Activated B cell treated with CpG ODN at 0.5 μM for 24 hours (primary cell): ENCODE measurements at regions of chr7 and their contacts with region 1.

Region 1: GRCh38 chr7:140053812-140054539 is 8.8 kb downstream of the PARP12 start:
- DNase-seq: no peak
- ATAC-seq: peak; percentile 81
- H3K4me3 Mint-ChIP-seq: peak overlapping the region; percentile 29
- H3K27ac Mint-ChIP-seq: peak overlapping the region; percentile 86
- H3K4me1 Mint-ChIP-seq: peaks cover 72% of the 10 kb centered on the region
- H3K27me3 Mint-ChIP-seq: no peaks in the 10 kb centered on the region
- CTCF ChIP-seq: no peak

Region 2: GRCh38 chr7:139494835-139495579 is 559.0 kb before region 1 on chr7:
- CTCF ChIA-PET with region 1: no interaction called
- POLR2A ChIA-PET with region 1: no interaction called
- intact Hi-C with region 1: no loop called
- DNase-seq: no peak
- ATAC-seq: peak; percentile 58
- H3K4me3 Mint-ChIP-seq: no peak overlapping the region
- H3K27ac Mint-ChIP-seq: peak overlapping the region; percentile 37
- H3K4me1 Mint-ChIP-seq: peaks cover 24% of the 10 kb centered on the region
- H3K27me3 Mint-ChIP-seq: peaks cover 2% of the 10 kb centered on the region
- CTCF ChIP-seq: no peak

Region 3: DNA sequence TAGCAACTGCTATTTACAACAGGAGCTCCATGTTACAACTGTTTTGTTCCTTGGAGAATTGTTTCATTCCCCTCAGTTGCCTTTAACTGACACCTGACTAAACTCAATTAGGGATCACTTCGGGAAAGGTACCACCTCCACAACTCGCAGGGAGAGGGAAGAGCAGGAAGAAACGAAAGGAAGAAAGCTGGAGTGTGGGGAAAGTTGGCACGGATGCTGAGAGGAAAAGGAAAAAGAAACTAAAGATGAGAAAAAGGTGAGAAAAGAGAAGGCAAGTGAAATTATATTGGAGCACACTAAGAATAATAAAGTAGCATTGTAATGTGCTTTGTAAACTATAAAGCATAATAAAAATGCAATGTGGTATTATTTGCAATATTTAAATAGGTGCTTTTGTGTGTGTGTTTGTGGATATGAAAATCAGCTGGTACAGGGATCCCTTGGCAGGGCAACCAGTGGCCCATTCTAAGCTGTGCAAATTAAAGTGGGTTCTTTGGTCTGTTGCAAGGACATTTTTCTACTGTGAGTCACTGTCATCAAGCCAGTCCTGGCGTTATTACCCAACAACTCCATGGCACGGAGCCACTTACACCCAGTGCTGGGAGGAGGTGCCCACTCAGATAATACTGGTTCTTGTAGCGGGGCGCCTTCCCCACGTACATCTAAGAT is 322.0 kb before region 1 on chr7:
- CTCF ChIA-PET with region 1: no interaction called
- POLR2A ChIA-PET with region 1: no interaction called
- intact Hi-C with region 1: no loop called
- DNase-seq: no peak
- ATAC-seq: no peak
- H3K4me3 Mint-ChIP-seq: no peak overlapping the region
- H3K27ac Mint-ChIP-seq: peak overlapping the region; percentile 20
- H3K4me1 Mint-ChIP-seq: peaks cover 51% of the 10 kb centered on the region
- H3K27me3 Mint-ChIP-seq: no peaks in the 10 kb centered on the region
- CTCF ChIP-seq: no peak

Region 4: GRCh38 chr7:139995017-139995931 is 58.7 kb before region 1 on chr7:
- CTCF ChIA-PET with region 1: no interaction called
- POLR2A ChIA-PET with region 1: no interaction called
- intact Hi-C with region 1: no loop called
- DNase-seq: no peak
- ATAC-seq: no peak
- H3K4me3 Mint-ChIP-seq: no peak overlapping the region
- H3K27ac Mint-ChIP-seq: no peak overlapping the region
- H3K4me1 Mint-ChIP-seq: peaks cover 4% of the 10 kb centered on the region
- H3K27me3 Mint-ChIP-seq: no peaks in the 10 kb centered on the region
- CTCF ChIP-seq: no peak

Region 5: DNA sequence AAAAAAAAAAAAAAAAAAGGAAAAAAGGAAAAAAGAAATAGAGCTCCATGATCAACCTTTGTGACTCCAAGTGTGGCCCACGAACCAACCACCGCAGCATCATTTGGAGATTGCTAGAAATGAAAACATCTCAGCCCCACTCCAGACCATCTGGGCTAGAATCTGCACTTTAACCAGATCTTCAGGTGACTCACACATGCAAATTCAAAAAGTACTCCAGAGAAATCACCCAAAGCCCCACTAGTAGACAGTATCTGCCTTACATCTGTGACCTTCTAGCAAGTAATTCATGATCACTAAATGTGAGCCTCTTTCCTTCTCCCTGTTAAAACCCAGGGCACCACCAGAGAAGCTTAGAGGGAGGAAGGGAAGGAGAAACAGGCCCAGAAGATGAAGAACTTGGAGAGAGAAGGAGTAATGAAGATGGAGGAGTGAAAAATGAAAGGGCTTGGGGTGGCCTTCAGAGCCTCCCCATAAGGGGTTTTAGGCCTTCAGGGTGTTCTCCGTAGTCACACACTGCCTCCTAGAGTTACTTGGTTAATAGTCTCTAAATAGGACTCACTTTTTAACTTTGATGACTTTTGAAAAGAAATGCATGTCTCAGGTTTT is 250.3 kb after region 1 on chr7:
- CTCF ChIA-PET with region 1: no interaction called
- POLR2A ChIA-PET with region 1: no interaction called
- intact Hi-C with region 1: loop called (anchors 1 kb)
- DNase-seq: no peak
- ATAC-seq: peak; percentile 96
- H3K4me3 Mint-ChIP-seq: peak overlapping the region; percentile 39
- H3K27ac Mint-ChIP-seq: peak overlapping the region; percentile 90
- H3K4me1 Mint-ChIP-seq: peaks cover 5% of the 10 kb centered on the region
- H3K27me3 Mint-ChIP-seq: no peaks in the 10 kb centered on the region
- CTCF ChIP-seq: no peak